ENCODE measurements at regions of chr11 and their contacts with region 1.

Region 1: DNA sequence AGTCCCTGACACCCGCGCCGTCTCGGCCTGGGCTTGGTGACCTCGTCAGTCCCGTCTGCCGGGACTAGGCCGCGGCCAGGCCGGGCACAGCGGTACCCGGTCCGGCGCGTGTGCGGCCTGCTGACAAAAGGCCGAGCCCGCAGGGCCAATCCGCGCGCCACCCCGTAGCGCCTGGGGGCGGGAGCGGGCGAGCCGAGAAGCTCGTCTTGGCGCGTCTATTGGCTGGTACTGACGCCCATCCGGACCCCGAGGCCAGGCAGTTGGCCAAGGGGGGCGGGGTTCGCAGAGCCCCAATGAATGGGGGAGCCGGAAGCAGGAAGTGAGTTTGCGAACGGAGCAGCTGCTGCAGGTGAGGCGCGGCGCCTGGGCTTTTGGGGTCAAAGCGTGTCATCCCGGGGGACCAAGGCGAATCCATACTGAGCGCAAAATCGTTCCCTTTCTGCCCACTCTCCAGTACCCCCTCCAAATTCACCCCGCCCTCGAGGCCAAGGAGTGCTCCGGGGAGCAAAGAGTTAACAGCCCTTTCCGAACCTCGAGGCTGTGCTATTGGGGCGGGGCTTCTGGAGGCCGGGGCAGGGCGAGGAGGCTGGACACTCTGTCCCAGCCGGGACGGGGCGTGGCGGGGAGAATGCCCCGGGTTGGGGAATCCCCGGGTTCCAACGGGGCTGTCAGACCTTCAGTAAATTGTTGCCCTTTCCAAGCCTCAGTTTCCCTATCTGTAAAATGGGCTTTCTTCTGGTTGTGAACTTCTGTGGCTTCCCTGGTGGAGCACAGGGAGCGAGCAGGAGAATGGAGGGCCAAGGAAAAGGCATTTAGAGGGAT is at the start of gene DPP3:
- DNase-seq: peak; percentile 97 to 100
- ATAC-seq: peak; percentile 92 to 95
- H3K4me3 ChIP-seq: peak within 1 kb of the TSS; percentile 73
- H3K27ac ChIP-seq: peak within 1 kb of the TSS; percentile 94 to 98
- H3K4me1 ChIP-seq: peaks cover 6% of the 10 kb centered on the region; the same call in 1 of the 3 replicates
- CTCF ChIP-seq: no peak
- EP300 ChIP-seq: no peak
- POLR2A ChIP-seq: peak; percentile 80
- RAD21 ChIP-seq: no peak
- polyA plus RNA-seq, gene DPP3: 52.2 TPM in 2 replicates

Region 2: DNA sequence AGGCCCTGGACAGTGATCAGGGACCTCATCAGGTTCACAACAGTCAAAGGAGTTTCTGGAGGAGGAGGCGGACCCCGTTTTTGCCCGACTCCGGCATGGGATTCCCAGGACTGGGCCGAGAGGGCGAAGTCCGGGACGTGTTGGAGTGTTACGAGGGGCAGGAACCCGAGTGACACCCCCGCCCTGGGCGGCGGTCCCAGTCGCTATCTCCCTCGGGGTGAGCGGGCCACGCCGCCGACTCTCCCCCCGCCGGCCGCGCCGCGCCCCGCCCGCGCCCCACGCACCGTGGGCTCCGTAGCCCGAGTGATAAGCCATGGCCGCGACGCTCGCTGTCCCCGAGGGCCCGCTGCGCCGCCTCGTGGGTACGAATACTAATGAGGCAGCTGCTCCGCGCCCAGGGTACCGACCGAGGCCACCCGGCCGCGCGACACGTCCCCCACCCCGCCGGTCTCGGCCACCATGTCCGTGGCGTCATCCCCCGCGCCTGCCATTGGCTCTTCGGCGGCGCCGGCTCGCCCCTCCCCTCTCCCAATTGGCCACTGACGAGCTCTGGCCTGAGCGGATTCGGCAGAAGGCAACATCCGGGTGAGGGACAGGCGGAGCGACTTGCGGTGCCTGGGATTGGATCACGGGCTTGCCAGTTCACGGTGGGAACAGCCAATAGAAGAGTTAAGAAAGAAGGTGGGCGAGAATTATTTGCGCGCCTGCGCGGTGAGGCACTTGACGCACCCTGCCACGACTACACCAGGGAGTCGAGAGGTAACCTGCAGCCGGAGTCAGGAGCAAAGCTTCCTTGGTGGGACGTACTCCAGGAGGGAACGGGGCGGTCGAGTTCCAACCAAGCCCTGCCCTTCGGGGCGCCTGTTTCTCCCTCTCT is 191.4 kb before region 1 on chr11 and contains the start of gene YIF1A:
- CTCF ChIA-PET with region 1: no interaction called
- POLR2A ChIA-PET with region 1: no interaction called
- DNase-seq: peak; percentile 99 to 100
- ATAC-seq: peak; percentile 78 to 94
- H3K4me3 ChIP-seq: peak within 1 kb of the TSS; percentile 86
- H3K27ac ChIP-seq: peak within 1 kb of the TSS; percentile 94 to 96
- H3K4me1 ChIP-seq: peaks cover 20% of the 10 kb centered on the region
- CTCF ChIP-seq: no peak
- EP300 ChIP-seq: no peak
- POLR2A ChIP-seq: peak; percentile 92
- RAD21 ChIP-seq: no peak
- polyA plus RNA-seq, gene YIF1A: 99.7 and 132 TPM in 2 replicates

Region 3: DNA sequence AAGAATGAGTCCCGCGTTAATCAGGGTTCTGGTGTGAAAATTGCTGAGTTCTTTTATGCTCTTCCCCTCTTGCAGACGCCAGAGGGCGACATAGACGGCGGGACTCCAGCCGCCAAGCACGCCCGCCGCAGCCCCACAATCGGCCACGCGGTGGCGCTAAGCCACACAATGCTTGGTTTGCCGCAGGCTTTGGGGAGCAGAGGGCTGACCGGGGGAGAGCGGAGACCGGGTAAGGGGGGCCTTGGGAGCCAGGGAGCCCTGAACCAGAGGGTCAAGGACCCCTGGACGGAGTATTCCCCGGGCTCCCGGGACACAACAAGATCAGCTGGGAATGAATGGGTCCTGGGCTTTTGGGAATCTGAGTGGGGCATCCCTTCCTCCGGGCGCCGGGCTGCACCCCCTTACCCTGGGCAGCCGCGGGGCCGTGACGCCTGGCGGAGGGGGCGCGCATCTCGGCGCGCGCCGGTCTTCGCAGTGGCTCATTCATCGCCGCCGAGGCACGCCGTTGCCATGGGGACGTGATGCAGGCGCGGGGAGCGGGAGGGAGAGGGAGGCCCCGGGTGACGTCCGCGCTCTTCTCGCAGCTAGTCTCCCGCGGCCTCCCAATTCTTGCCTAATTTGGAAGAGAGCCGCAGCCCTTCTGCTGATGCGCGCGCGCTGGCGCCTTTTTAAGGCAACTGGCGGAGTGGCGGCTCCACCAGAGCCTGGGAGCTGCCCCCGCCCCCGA is 71.7 kb before region 1 on chr11:
- CTCF ChIA-PET with region 1: interaction called, 46 read pairs
- POLR2A ChIA-PET with region 1: no interaction called
- DNase-seq: peak; percentile 87 to 91
- ATAC-seq: peak; percentile 72 to 88
- H3K4me3 ChIP-seq: peak overlapping the region; percentile 47
- H3K27ac ChIP-seq: peak overlapping the region in 1 of 2 experiments; percentile 38; a peak in 1 of 6 replicates
- H3K4me1 ChIP-seq: no peaks in the 10 kb centered on the region
- CTCF ChIP-seq: peak; percentile 100
- EP300 ChIP-seq: no peak
- POLR2A ChIP-seq: no peak
- RAD21 ChIP-seq: peak; percentile 95 to 99

Region 4: DNA sequence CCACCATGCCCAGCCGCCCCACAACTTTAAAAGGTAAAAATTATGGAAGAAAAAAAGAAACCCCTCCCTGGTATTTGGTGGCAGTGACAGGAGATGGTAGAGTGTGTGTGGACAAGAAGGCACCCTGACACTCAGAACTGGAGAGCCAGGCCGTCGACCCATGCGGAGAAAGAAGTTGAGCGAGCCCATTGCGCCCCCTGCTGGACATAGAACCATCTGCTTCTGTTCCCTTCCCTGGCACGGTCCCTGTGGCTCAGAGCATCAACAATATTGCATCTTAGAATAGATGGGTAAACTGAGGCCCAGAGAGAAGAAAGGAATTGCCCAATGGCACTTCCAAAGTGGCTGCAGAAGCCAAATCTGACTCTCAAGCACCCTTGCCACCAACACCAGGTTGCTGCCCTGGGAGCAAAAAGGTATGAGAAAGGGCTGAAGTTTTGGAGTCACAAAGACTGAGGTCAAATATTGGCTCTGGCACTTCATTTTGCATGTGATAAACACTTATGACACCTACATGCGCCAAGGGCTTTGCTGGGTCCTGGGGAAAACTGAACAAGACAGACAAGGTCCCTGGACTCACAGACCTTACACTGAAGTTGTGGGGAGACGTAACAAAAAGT is 50.2 kb before region 1 on chr11:
- CTCF ChIA-PET with region 1: interaction called, 13 read pairs
- POLR2A ChIA-PET with region 1: no interaction called
- DNase-seq: peak; percentile 72 to 75
- ATAC-seq: peak; percentile 94 to 96
- H3K4me3 ChIP-seq: no peak overlapping the region
- H3K27ac ChIP-seq: no peak overlapping the region
- H3K4me1 ChIP-seq: no peaks in the 10 kb centered on the region
- CTCF ChIP-seq: peak; percentile 87
- EP300 ChIP-seq: no peak
- POLR2A ChIP-seq: no peak
- RAD21 ChIP-seq: peak; percentile 79 to 87

Region 5: GRCh38 chr11:66466225-66467027 is 13.9 kb before region 1 on chr11 and contains the start of gene PELI3:
- CTCF ChIA-PET with region 1: interaction called, 37 read pairs
- POLR2A ChIA-PET with region 1: interaction called, 47 read pairs
- DNase-seq: peak; percentile 84 to 89
- ATAC-seq: peak; percentile 86 to 94
- H3K4me3 ChIP-seq: peak within 1 kb of the TSS; percentile 72
- H3K27ac ChIP-seq: peak within 1 kb of the TSS; percentile 76 to 95
- H3K4me1 ChIP-seq: peaks cover 10% of the 10 kb centered on the region
- CTCF ChIP-seq: no peak
- EP300 ChIP-seq: no peak
- POLR2A ChIP-seq: peak; percentile 17
- RAD21 ChIP-seq: no peak
- polyA plus RNA-seq, gene PELI3: 2.3 and 2.7 TPM in 2 replicates

Region 6: GRCh38 chr11:66510271-66510989 is 30.1 kb after region 1 on chr11 and contains the start of gene BBS1:
- CTCF ChIA-PET with region 1: no interaction called
- POLR2A ChIA-PET with region 1: interaction called, 20 read pairs
- DNase-seq: peak; percentile 82 to 93
- ATAC-seq: peak; percentile 97 to 99
- H3K4me3 ChIP-seq: peak within 1 kb of the TSS; percentile 75
- H3K27ac ChIP-seq: peak within 1 kb of the TSS; percentile 77 to 84
- H3K4me1 ChIP-seq: peaks cover 9% of the 10 kb centered on the region; the same call in 2 of the 3 replicates
- CTCF ChIP-seq: no peak
- EP300 ChIP-seq: no peak
- POLR2A ChIP-seq: peak; percentile 70
- RAD21 ChIP-seq: no peak
- polyA plus RNA-seq, gene BBS1: 12.5 and 14.7 TPM in 2 replicates

Region 7: DNA sequence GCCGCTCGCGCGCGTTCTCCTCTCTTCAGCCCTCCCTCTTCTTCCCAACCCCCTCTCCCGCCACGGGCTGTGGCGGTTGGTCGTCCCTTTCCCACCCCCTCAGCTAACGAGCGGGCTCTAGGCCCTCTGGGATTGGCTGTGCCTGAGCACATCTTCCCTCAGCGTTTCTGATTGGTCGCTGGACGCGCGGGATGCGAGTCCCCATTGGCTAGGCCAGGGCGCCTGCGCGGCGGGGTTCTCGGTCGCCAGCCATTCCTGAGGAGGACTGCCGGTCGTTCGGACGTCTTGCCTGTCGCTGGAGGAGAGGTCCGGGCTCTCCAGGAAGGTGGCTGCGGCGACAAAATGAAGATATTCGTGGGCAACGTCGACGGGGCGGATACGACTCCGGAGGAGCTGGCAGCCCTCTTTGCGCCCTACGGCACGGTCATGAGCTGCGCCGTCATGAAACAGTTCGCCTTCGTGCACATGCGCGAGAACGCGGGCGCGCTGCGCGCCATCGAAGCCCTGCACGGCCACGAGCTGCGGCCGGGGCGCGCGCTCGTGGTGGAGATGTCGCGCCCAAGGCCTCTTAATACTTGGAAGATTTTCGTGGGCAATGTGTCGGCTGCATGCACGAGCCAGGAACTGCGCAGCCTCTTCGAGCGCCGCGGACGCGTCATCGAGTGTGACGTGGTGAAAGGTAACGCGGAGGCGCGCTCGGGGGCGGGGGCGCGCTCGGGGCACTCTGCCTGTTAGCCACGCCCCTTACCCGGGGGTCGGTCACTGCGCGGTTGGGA is 136.2 kb after region 1 on chr11 and contains the start of gene RBM14:
- CTCF ChIA-PET with region 1: interaction called, 3 read pairs
- POLR2A ChIA-PET with region 1: interaction called, 10 read pairs
- DNase-seq: peak; percentile 99 to 100
- ATAC-seq: peak; percentile 96 to 98
- H3K4me3 ChIP-seq: peak within 1 kb of the TSS; percentile 60
- H3K27ac ChIP-seq: peak within 1 kb of the TSS; percentile 95 to 97
- H3K4me1 ChIP-seq: peaks cover 29% of the 10 kb centered on the region
- CTCF ChIP-seq: no peak
- EP300 ChIP-seq: no peak
- POLR2A ChIP-seq: peak; percentile 94
- RAD21 ChIP-seq: no peak
- polyA plus RNA-seq, gene RBM14: 33.0 and 38.0 TPM in 2 replicates